ENCODE measurements at regions of chr21 and their contacts with region 1.

Region 1: GRCh38 chr21:32653311-32653901 is 41.2 kb upstream of the CFAP298 start:
- DNase-seq: peak in 1 of 2 experiments; percentile 49
- H3K4me3 ChIP-seq: no peak overlapping the region
- H3K4me3 Mint-ChIP-seq: no peak overlapping the region
- H3K27ac Mint-ChIP-seq: no peak overlapping the region
- H3K4me1 ChIP-seq: no peaks in the 10 kb centered on the region
- H3K4me1 Mint-ChIP-seq: no peaks in the 10 kb centered on the region
- H3K27me3 ChIP-seq: no peaks in the 10 kb centered on the region
- H3K27me3 Mint-ChIP-seq: no peaks in the 10 kb centered on the region
- CTCF ChIP-seq: peak; percentile 59 to 68

Region 2: DNA sequence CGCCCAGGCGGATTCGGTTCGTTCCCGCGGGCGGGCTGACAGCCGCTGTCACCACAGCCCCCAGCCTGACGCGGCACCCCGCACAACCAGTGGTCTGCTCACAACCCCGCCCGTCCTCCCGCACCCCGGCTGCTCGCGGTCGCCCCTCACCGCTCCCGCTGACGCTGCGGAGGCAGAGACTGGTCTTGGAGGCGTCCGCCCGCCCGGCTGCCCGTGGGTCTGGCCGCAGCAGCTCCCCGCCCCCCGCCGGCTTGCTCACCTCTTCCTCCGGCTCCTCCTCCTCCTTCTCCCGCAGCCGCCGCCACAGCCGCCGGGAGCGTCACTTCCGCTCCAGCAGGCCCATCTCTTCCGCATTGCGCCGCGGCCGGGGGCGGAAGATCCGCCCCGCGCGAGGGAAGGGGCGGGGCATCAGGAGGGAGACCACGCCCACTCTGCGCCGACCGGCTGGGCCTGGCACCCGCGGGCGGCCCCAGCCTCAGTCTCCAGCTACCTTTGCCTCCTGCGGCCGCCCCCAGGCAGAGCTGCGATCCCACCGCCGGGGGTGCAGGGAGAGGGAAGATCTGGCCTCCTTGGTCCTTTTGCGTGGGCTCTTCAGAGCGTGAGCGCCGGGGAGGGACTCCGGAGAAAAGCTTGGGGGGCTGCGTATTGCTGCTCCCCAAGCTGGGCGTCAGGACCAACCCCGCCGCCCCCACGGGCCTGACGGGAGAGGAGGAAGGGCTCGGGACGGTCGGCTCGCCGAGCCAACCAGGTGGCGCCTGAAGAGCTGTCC is 74.5 kb after region 1 on chr21 and contains the start of gene SYNJ1:
- CTCF ChIA-PET with region 1: no interaction called
- POLR2A ChIA-PET with region 1: no interaction called
- intact Hi-C with region 1: loop called (anchors 1 kb)
- DNase-seq: peak; percentile 95
- H3K4me3 ChIP-seq: peak within 1 kb of the TSS; percentile 97
- H3K4me3 Mint-ChIP-seq: peak within 1 kb of the TSS; percentile 99
- H3K27ac Mint-ChIP-seq: peak within 1 kb of the TSS; percentile 91
- H3K4me1 ChIP-seq: peaks cover 4% of the 10 kb centered on the region; the same call in 1 of the 2 replicates
- H3K4me1 Mint-ChIP-seq: peaks cover 6% of the 10 kb centered on the region
- H3K27me3 ChIP-seq: no peaks in the 10 kb centered on the region
- H3K27me3 Mint-ChIP-seq: no peaks in the 10 kb centered on the region
- CTCF ChIP-seq: no peak
- total RNA-seq, gene SYNJ1: 8.3 and 11.5 TPM in 2 replicates